ENCODE measurements at regions of chr2 and their contacts with region 1.

Region 1: GRCh38 chr2:227132986-227133385 is 31.0 kb downstream of the COL4A4 start:
- DNase-seq: no peak
- H3K4me3 ChIP-seq: no peak overlapping the region
- H3K27ac ChIP-seq: no peak overlapping the region
- H3K4me1 ChIP-seq: no peaks in the 10 kb centered on the region
- H3K27me3 ChIP-seq: peaks cover 0 to 9% (median 6%) of the 10 kb centered on the region in 5 experiments

Region 2: GRCh38 chr2:226742347-226742746 is 390.6 kb before region 1 on chr2:
- CTCF ChIA-PET with region 1: no interaction called
- POLR2A ChIA-PET with region 1: interaction called, 10 read pairs
- DNase-seq: no peak
- H3K4me3 ChIP-seq: no peak overlapping the region
- H3K27ac ChIP-seq: no peak overlapping the region
- H3K4me1 ChIP-seq: no peaks in the 10 kb centered on the region
- H3K27me3 ChIP-seq: peaks cover 0 to 35% (median 13%) of the 10 kb centered on the region in 5 experiments

Region 3: GRCh38 chr2:227147023-227147422 is 14.0 kb after region 1 on chr2:
- CTCF ChIA-PET with region 1: no interaction called
- POLR2A ChIA-PET with region 1: no interaction called
- DNase-seq: no peak
- H3K4me3 ChIP-seq: no peak overlapping the region
- H3K27ac ChIP-seq: no peak overlapping the region
- H3K4me1 ChIP-seq: no peaks in the 10 kb centered on the region
- H3K27me3 ChIP-seq: peaks cover 0 to 3% (median 0%) of the 10 kb centered on the region in 5 experiments

Region 4: DNA sequence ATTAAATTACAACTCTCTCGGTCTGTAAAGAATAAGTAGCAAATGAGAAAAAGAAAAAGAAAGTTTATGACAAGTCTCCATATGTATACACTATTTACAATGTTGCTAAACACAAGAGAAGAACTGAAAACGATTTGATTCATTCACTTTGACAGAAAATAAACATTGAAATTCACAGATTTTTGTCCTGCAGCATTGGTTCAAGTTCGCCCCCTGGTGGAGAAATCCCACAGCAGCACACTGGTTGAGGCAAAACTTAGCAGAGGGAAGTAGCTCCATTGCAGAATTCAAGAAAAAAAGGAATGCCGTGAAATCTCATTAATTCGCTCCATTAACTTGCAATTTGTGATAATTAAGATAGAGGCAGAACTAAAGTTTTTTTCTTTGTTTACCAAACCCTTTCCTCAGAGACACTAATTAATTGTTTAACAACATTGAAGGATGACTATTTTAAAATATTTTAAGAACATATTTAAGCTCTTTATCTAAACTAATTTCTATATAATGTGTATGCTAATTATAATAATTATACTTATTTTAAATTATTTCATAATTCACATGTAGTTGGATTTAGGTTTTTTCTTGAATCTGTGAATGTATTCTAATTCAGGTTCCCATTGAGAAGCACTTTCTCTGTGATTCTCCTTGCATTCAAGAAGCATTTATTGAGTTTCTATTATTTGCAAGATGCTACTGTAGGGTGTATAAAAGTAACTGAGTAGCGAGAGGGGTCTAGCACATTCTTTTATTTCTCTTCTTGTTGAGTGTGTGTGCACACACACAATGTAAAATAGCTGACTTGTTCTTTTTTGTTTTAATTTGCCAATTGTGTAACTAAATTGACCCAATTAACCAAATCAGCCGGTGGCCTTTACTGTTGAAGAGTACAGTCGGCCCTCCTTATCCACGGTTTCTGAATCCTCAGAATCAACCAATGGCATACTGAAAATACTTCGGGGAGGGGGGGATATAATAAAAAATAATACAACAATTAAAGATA is 105.6 kb after region 1 on chr2:
- CTCF ChIA-PET with region 1: interaction called, 17 read pairs
- POLR2A ChIA-PET with region 1: no interaction called
- DNase-seq: peak; percentile 29 to 67 (median 56)
- H3K4me3 ChIP-seq: no peak overlapping the region
- H3K27ac ChIP-seq: no peak overlapping the region
- H3K4me1 ChIP-seq: no peaks in the 10 kb centered on the region
- H3K27me3 ChIP-seq: peaks cover 0 to 1% (median 0%) of the 10 kb centered on the region in 5 experiments

Region 5: GRCh38 chr2:227766373-227766883 is 633.4 kb after region 1 on chr2:
- CTCF ChIA-PET with region 1: interaction called, 23 read pairs
- POLR2A ChIA-PET with region 1: no interaction called
- DNase-seq: peak; percentile 48 to 65 (median 59)
- H3K4me3 ChIP-seq: no peak overlapping the region
- H3K27ac ChIP-seq: no peak overlapping the region
- H3K4me1 ChIP-seq: no peaks in the 10 kb centered on the region
- H3K27me3 ChIP-seq: no peaks in the 10 kb centered on the region

Measured in common myeloid progenitor, CD34-positive (primary cell).